Calu3 (cell line): ENCODE measurements at regions of chrX and their contacts with region 1.

Region 1: DNA sequence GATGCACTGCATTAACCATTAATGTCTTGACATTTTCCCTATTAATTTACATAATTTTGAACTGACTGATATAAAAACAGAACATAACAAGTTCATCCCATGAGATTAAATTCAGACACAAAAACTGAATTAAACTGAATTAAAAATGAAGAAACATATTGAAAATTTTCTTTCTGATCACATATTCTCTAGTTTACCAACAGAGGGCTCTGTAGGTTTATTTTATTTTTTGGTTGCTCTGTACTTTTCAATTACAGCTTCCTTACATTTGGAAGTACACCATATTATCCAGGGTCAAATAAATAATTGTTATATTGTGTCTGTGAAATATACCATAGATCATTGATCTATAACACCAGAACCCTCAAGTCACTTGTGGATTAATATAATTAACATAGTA is 27.3 kb upstream of the CT83 start:
- DNase-seq: no peak
- H3K4me3 Mint-ChIP-seq: no peak overlapping the region
- H3K27ac Mint-ChIP-seq: no peak overlapping the region
- H3K4me1 Mint-ChIP-seq: no peaks in the 10 kb centered on the region
- H3K27me3 Mint-ChIP-seq: no peaks in the 10 kb centered on the region
- CTCF ChIP-seq: peak; percentile 21

Region 2: DNA sequence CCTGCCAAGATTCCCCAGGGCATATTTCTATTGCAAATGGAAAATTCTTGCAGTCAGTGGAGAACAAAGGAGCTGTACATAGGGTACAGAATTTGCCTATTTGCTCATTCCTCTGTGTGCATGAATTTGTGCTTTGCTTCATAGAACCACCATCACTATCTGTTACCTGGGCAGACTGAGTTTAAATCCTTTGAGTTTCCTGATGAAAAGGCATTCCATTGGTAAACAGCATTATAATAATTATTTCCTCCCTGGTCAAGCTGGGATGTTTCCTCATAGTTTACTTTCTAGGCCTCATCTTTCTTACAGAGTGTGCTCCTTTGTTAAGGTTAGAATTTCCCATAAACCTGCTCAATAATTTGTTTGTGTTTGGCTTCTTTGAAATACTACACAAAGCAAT is 54.5 kb before region 1 on chrX:
- CTCF ChIA-PET with region 1: no interaction called
- intact Hi-C with region 1: no loop called
- DNase-seq: no peak
- H3K4me3 Mint-ChIP-seq: peak overlapping the region; percentile 81
- H3K27ac Mint-ChIP-seq: peak overlapping the region; percentile 92
- H3K4me1 Mint-ChIP-seq: peaks cover 19% of the 10 kb centered on the region
- H3K27me3 Mint-ChIP-seq: no peaks in the 10 kb centered on the region
- CTCF ChIP-seq: no peak

Region 3: DNA sequence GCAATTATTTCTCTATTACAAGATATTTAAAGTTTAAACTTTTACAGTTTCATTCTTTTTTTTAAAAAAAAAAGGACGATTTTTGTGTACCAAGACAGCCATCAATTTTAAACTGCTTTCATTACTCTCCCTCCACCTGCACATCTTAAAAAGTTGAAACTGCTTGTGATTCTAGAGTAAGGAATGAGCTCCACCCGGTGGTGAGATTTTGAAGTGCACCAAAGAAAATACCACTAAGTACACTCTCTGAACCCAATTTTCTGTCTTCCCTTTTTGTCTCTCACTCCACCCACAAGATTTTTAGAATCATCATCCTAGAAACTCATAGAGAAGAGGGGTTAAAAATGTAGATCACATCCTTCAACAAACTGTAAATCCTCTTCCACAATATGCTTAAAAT is 1764.5 kb after region 1 on chrX:
- CTCF ChIA-PET with region 1: interaction called, 3 read pairs
- intact Hi-C with region 1: loop called (anchors 5 kb)
- DNase-seq: peak; percentile 46
- H3K4me3 Mint-ChIP-seq: no peak overlapping the region
- H3K27ac Mint-ChIP-seq: no peak overlapping the region
- H3K4me1 Mint-ChIP-seq: no peaks in the 10 kb centered on the region
- H3K27me3 Mint-ChIP-seq: no peaks in the 10 kb centered on the region
- CTCF ChIP-seq: peak; percentile 21